ENCODE measurements at regions of chr2 and their contacts with region 1.

Region 1: GRCh38 chr2:72892506-72893173 is 5.4 kb downstream of the SPR start:
- DNase-seq: peak; percentile 90

Region 2: GRCh38 chr2:71530641-71531332 is 1361.9 kb before region 1 on chr2:
- intact Hi-C with region 1: no loop called
- DNase-seq: peak; percentile 30

Region 3: GRCh38 chr2:72934683-72935610 is 42.3 kb after region 1 on chr2:
- intact Hi-C with region 1: no loop called
- DNase-seq: peak; percentile 49

Region 4: GRCh38 chr2:72973566-72974435 is 81.2 kb after region 1 on chr2:
- intact Hi-C with region 1: loop called in 1 of 2 experiments (anchors 5 kb)
- DNase-seq: no peak

Region 5: GRCh38 chr2:73314441-73314840 is 421.8 kb after region 1 on chr2:
- intact Hi-C with region 1: no loop called
- DNase-seq: no peak